Ascending aorta (tissue), 2 donors: ENCODE measurements at regions of chr3 and their contacts with region 1.

Region 1: DNA sequence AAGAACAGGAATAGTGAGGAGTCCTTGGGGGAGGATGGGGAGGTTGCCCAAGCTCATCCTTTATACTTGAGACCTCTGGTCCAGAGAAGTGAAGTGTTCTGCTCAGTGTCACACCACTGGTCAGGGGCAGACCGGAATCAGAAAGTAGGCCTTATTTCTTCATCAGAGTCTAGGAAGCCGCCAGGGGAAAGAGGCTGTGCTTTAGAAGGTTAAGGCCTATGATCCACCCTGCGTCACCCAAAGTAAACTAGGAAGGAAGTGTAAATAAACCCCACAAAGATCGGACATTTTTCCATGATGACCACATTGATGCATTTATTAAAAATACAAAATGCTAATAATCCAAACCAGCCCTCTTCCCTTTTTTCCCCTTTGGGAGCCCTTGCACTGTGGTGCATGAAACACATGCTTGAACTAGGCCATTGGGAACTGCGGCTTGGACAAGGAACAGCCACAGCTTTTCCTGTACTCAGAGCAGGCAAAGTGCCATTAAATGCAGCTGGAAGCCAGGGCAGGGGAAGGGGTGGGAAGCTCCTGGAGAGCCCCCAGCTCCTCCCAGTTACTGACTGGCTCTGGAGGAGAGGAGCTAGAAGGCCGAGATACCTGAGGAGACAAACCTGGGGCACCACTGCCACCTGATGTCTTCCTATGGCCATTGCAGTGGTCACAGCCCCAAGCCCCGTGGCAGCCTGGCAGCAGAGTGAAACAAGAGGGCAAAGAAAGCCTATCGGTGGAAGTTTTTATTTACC is 37.0 kb downstream of the CDC25A start:
- DNase-seq: peak; percentile 26 to 87
- H3K4me3 ChIP-seq: no peak overlapping the region
- H3K27ac ChIP-seq: peak overlapping the region in 1 of 2 donors; percentile 74
- H3K4me1 ChIP-seq: peaks cover 0 to 3% of the 10 kb centered on the region in 2 donors
- H3K27me3 ChIP-seq: no peaks in the 10 kb centered on the region
- CTCF ChIP-seq: peak; percentile 84 to 90 (median 88)

Region 2: GRCh38 chr3:47836986-47837385 is 314.2 kb before region 1 on chr3:
- intact Hi-C with region 1: loop called (anchors 2 kb)
- DNase-seq: no peak
- H3K4me3 ChIP-seq: no peak overlapping the region
- H3K27ac ChIP-seq: peak overlapping the region; percentile 14 to 43
- H3K4me1 ChIP-seq: no peaks in the 10 kb centered on the region
- H3K27me3 ChIP-seq: no peaks in the 10 kb centered on the region
- CTCF ChIP-seq: no peak